HepG2 (cell line): ENCODE measurements at regions of chr6 and their contacts with region 1.

Region 1: DNA sequence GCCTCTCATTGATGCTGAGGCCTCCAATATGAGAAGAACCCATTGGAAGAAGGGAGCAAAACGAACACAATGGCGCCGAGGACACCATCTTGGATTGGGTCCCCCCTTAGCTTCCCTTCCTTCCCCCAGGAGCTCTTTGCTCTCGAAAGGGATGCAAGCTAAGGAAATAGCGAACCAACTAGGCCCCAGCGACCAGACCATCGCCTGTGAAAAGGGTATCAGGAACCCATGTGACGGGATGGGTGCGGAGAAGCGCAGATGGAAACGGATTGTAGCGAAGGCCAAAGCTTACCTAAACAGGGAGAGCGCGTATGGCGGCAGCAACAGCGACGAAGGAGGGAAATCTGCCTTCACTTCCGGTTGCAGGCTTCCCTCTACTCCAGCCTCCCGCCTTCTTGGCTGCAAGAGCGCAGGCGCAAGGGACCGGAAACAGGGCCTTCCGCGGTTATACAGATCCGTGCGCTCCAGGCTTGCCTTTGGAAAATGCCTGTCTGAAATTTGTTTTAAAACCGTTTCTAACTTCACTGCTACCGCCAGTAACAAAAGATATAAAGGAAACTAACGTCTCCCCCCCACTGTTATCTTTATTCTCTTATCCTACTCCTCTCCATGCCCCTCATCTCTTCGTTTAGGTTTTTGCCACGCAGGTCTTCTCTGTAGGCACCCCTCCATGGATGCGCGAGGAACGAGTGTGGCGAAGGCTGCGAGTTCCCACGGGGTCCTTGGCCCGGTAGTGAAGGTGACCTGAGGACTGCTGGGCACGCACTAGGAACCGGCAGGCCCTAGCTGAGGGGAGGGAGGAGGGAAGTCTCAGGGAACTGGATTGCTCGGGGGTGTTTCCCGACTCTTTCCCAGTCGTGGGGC is at the start of gene DDX39B:
- DNase-seq: peak; percentile 98
- ATAC-seq: peak; percentile 85
- H3K4me3 ChIP-seq: peak within 1 kb of the TSS; percentile 66 to 99 (median 83)
- H3K27ac ChIP-seq: peak within 1 kb of the TSS; percentile 95
- H3K4me1 ChIP-seq: peaks cover 59% of the 10 kb centered on the region
- H3K27me3 ChIP-seq: no peaks in the 10 kb centered on the region; a peak in 2 of 5 replicates
- CTCF ChIP-seq: peak; percentile 39
- EP300 ChIP-seq: peak; percentile 33 to 60; a peak in 2 of 4 replicates
- POLR2A ChIP-seq: peak; percentile 98 to 99
- RAD21 ChIP-seq: peak; percentile 37; the same call in 1 of the 2 replicates
- total RNA-seq, gene DDX39B: 570 and 737 TPM in 2 replicates

Region 2: GRCh38 chr6:31356946-31357466 is 184.9 kb before region 1 on chr6 and contains the start of gene HLA-B:
- CTCF ChIA-PET with region 1: no interaction called
- POLR2A ChIA-PET with region 1: no interaction called
- in situ Hi-C with region 1: no loop called
- intact Hi-C with region 1: no loop called
- DNase-seq: peak; percentile 49
- ATAC-seq: peak; percentile 90
- H3K4me3 ChIP-seq: peak within 1 kb of the TSS; percentile 55 to 71 (median 59); a peak in 5 of 6 replicates
- H3K27ac ChIP-seq: no peak within 1 kb of the TSS
- H3K4me1 ChIP-seq: no peaks in the 10 kb centered on the region
- H3K27me3 ChIP-seq: peaks cover 0 to 25% of the 10 kb centered on the region in 2 experiments; a peak in 2 of 5 replicates
- CTCF ChIP-seq: no peak
- EP300 ChIP-seq: no peak
- POLR2A ChIP-seq: no peak
- RAD21 ChIP-seq: no peak
- total RNA-seq, gene HLA-B: 15.5 and 35.3 TPM in 2 replicates

Region 3: DNA sequence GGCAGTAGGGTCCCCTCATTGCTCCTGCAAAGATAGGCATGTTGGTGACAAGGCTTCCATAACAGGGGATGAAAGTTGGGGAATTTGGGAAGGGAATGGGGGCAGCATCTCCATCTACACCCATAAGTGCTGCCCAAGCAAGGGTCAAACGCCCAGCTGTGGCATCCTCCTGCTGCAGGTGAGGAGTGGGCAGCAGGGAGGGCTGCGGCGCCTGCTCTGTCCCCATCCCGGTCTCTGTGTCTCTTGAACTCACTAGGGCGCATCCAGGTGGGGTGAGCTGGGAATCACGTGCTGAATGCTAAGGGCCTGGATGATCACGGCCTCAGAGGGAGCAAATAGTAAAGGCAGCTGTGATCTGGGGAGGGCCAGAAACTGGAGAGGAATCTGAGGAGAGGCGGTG is 129.4 kb before region 1 on chr6:
- CTCF ChIA-PET with region 1: no interaction called
- POLR2A ChIA-PET with region 1: no interaction called
- in situ Hi-C with region 1: no loop called
- intact Hi-C with region 1: no loop called
- DNase-seq: no peak
- ATAC-seq: no peak
- H3K4me3 ChIP-seq: no peak overlapping the region
- H3K27ac ChIP-seq: no peak overlapping the region
- H3K4me1 ChIP-seq: peaks cover 27% of the 10 kb centered on the region
- H3K27me3 ChIP-seq: no peaks in the 10 kb centered on the region
- CTCF ChIP-seq: no peak
- EP300 ChIP-seq: no peak
- POLR2A ChIP-seq: no peak
- RAD21 ChIP-seq: no peak

Region 4: DNA sequence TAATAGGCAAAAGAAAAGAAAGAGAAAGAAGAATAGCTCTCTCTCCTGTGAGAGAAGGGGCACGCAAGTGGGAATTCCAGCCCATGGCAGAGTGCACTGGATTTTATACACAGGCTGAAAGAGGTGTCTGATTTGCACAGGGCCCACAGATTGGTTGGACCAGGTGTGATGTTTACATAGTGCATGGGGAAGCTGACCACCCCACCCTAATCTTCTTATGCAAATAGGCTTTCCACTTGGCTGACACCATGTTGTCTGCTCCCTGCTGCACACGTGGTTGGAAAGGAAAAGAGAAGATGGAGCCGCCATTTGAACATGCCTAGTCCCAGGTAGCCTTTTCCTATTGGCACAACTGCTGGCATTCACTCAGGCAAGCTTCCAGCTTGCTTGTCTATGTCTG is 118.3 kb before region 1 on chr6:
- CTCF ChIA-PET with region 1: no interaction called
- POLR2A ChIA-PET with region 1: no interaction called
- in situ Hi-C with region 1: no loop called
- intact Hi-C with region 1: no loop called
- DNase-seq: no peak
- ATAC-seq: no peak; the same call in 2 of the 3 replicates
- H3K4me3 ChIP-seq: no peak overlapping the region
- H3K27ac ChIP-seq: no peak overlapping the region
- H3K4me1 ChIP-seq: no peaks in the 10 kb centered on the region; the same call in 1 of the 2 replicates
- H3K27me3 ChIP-seq: no peaks in the 10 kb centered on the region
- CTCF ChIP-seq: no peak
- EP300 ChIP-seq: no peak
- POLR2A ChIP-seq: no peak
- RAD21 ChIP-seq: no peak

Region 5: GRCh38 chr6:31479933-31480535 is 61.9 kb before region 1 on chr6:
- CTCF ChIA-PET with region 1: no interaction called
- POLR2A ChIA-PET with region 1: no interaction called
- in situ Hi-C with region 1: no loop called
- intact Hi-C with region 1: no loop called
- DNase-seq: no peak
- ATAC-seq: no peak
- H3K4me3 ChIP-seq: no peak overlapping the region
- H3K27ac ChIP-seq: no peak overlapping the region
- H3K4me1 ChIP-seq: peaks cover 13% of the 10 kb centered on the region
- H3K27me3 ChIP-seq: peaks cover 6 to 48% of the 10 kb centered on the region in 2 experiments; a peak in 4 of 5 replicates
- CTCF ChIP-seq: no peak
- EP300 ChIP-seq: no peak
- POLR2A ChIP-seq: no peak
- RAD21 ChIP-seq: no peak

Region 6: GRCh38 chr6:31493875-31494694 is 47.8 kb before region 1 on chr6:
- CTCF ChIA-PET with region 1: interaction called, 10 read pairs
- POLR2A ChIA-PET with region 1: interaction called, 20 read pairs
- in situ Hi-C with region 1: no loop called
- intact Hi-C with region 1: loop called (anchors 2 kb)
- DNase-seq: peak; percentile 70
- ATAC-seq: peak; percentile 84
- H3K4me3 ChIP-seq: peak overlapping the region; percentile 57 to 80 (median 62)
- H3K27ac ChIP-seq: no peak overlapping the region
- H3K4me1 ChIP-seq: peaks cover 49% of the 10 kb centered on the region
- H3K27me3 ChIP-seq: peaks cover 0 to 20% of the 10 kb centered on the region in 2 experiments; a peak in 2 of 5 replicates
- CTCF ChIP-seq: peak; percentile 97
- EP300 ChIP-seq: no peak
- POLR2A ChIP-seq: no peak
- RAD21 ChIP-seq: peak; percentile 91

Region 7: DNA sequence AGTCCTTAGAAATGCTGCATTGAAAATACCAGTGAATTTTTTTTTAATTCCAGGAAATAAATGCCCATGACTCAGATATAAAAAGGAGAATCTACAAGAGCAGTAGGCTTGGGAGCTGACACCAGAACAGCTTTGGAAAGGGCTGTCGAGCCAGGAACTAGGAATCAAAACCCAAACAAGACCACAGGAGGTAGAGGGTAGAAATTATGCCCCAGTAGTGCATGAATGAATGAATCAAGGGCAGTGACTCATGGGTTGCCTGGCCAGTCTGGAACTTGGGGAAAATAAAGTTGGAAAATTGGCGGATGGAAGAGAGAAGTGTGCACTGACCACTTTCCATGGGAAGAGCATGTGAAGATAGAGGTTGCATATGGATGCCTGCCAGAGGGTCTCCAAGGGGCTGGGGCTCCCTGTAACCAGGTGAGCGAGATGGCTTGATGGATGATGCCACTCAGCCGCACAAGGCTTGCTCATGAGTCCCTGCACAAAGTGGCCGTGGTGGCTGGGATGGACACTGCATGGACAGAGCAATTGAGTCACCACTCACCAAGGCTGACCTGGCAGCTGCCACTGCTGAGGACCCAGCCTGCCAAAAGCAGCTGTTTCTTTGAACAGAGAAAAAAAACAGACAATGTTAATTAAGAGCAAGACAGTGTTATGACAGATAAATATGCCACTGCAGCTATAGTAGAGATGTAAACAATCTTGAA is 28.3 kb before region 1 on chr6:
- CTCF ChIA-PET with region 1: no interaction called
- POLR2A ChIA-PET with region 1: interaction called, 10 read pairs
- in situ Hi-C with region 1: no loop called
- intact Hi-C with region 1: no loop called
- DNase-seq: no peak
- ATAC-seq: no peak
- H3K4me3 ChIP-seq: no peak overlapping the region
- H3K27ac ChIP-seq: no peak overlapping the region
- H3K4me1 ChIP-seq: peaks cover 6% of the 10 kb centered on the region
- H3K27me3 ChIP-seq: peaks cover 4 to 17% of the 10 kb centered on the region in 2 experiments; a peak in 2 of 5 replicates
- CTCF ChIP-seq: no peak
- EP300 ChIP-seq: no peak
- POLR2A ChIP-seq: no peak
- RAD21 ChIP-seq: no peak

Region 8: DNA sequence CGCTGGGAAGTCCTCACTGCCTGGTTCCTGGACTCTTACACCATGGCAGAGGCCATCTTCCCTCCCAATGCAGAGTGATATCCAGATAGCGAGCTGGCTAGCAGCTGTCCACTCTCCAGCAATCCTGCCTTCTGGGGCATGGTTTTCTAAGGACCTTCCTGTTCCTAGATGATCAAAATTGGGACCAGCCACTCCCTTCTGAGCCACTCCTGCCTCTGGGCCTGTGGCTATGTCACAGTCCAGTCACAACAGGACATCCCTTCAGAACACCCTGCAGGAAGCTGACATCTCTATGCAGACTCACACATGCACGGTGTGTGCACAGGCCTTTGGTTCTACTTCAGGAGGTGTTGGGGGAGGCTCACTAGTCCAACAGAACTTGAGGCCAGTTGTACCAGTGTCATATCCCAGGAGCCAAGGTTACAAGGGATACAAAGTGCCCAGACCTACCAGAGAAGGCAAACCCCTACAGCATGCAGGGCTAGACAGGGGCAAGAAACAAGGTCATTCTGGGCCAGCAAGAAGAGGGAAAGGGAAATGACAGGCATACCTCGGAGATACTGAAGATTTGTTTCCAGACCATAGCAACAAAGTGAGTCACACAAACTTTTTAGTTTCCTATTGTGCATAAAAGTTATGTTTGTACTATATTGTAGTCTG is 15.8 kb before region 1 on chr6:
- CTCF ChIA-PET with region 1: no interaction called
- POLR2A ChIA-PET with region 1: interaction called, 123 read pairs
- in situ Hi-C with region 1: no loop called
- intact Hi-C with region 1: no loop called
- DNase-seq: no peak
- ATAC-seq: peak; percentile 16
- H3K4me3 ChIP-seq: 0 out of 6 replicates have a peak overlapping the region, but pooled peaks of 1 of the 3 experiments have one; percentile 8
- H3K27ac ChIP-seq: no peak overlapping the region
- H3K4me1 ChIP-seq: peaks cover 52% of the 10 kb centered on the region
- H3K27me3 ChIP-seq: no peaks in the 10 kb centered on the region
- CTCF ChIP-seq: no peak
- EP300 ChIP-seq: no peak
- POLR2A ChIP-seq: no peak
- RAD21 ChIP-seq: no peak

Region 9: DNA sequence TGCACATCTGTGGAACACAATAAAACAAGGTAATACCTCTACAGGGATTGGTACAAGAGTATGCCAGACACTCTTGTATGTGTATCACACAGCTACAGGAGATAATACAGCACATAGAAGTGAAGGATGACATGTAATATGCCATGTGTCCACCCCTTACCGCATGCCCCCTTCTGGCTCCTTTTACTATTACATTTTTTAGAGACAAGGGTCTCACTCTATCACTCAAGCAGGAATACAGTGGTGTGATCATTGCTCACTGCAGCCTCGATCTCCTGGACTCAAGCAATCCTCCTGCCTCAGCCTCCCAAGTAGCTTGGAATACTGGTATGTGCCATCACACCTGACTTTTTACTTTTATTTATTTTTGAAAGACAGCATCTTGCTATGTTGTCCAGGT is 55.1 kb after region 1 on chr6:
- CTCF ChIA-PET with region 1: interaction called, 84 read pairs
- POLR2A ChIA-PET with region 1: interaction called, 36 read pairs
- in situ Hi-C with region 1: loop called (anchors 5 kb)
- intact Hi-C with region 1: loop called (anchors 1 kb)
- DNase-seq: peak; percentile 61
- ATAC-seq: peak; percentile 68
- H3K4me3 ChIP-seq: no peak overlapping the region
- H3K27ac ChIP-seq: no peak overlapping the region
- H3K4me1 ChIP-seq: peaks cover 19% of the 10 kb centered on the region
- H3K27me3 ChIP-seq: peaks cover 0 to 3% of the 10 kb centered on the region in 2 experiments; a peak in 1 of 5 replicates
- CTCF ChIP-seq: peak; percentile 68
- EP300 ChIP-seq: no peak
- POLR2A ChIP-seq: no peak
- RAD21 ChIP-seq: peak; percentile 45; the same call in 1 of the 2 replicates

Region 10: GRCh38 chr6:31619805-31620585 is 78.1 kb after region 1 on chr6:
- CTCF ChIA-PET with region 1: no interaction called
- POLR2A ChIA-PET with region 1: interaction called, 27 read pairs
- in situ Hi-C with region 1: no loop called
- intact Hi-C with region 1: no loop called
- DNase-seq: peak; percentile 99
- ATAC-seq: peak; percentile 90
- H3K4me3 ChIP-seq: peak overlapping the region; percentile 63 to 92 (median 75)
- H3K27ac ChIP-seq: peak overlapping the region; percentile 98
- H3K4me1 ChIP-seq: peaks cover 36% of the 10 kb centered on the region
- H3K27me3 ChIP-seq: no peaks in the 10 kb centered on the region; a peak in 1 of 5 replicates
- CTCF ChIP-seq: no peak
- EP300 ChIP-seq: no peak; a peak in 1 of 4 replicates
- POLR2A ChIP-seq: peak; percentile 81 to 85
- RAD21 ChIP-seq: peak; percentile 34; the same call in 1 of the 2 replicates

Region 11: GRCh38 chr6:31665501-31666336 is 123.8 kb after region 1 on chr6 and contains the start of gene CSNK2B:
- CTCF ChIA-PET with region 1: no interaction called
- POLR2A ChIA-PET with region 1: interaction called, 12 read pairs
- in situ Hi-C with region 1: no loop called
- intact Hi-C with region 1: no loop called
- DNase-seq: peak; percentile 99
- ATAC-seq: peak; percentile 83
- H3K4me3 ChIP-seq: peak within 1 kb of the TSS; percentile 93 to 98 (median 94)
- H3K27ac ChIP-seq: peak within 1 kb of the TSS; percentile 99
- H3K4me1 ChIP-seq: peaks cover 71% of the 10 kb centered on the region
- H3K27me3 ChIP-seq: no peaks in the 10 kb centered on the region; a peak in 1 of 5 replicates
- CTCF ChIP-seq: peak; percentile 21
- EP300 ChIP-seq: 0 out of 4 replicates have a peak, but pooled peaks of 1 of the 2 experiments have one; percentile 1
- POLR2A ChIP-seq: peak in 1 of 2 experiments; percentile 98; a peak in 2 of 4 replicates
- RAD21 ChIP-seq: peak; percentile 8; the same call in 1 of the 2 replicates
- total RNA-seq, gene CSNK2B: 296 and 316 TPM in 2 replicates